ENCODE measurements at regions of chr1 and their contacts with region 1.

Region 1: DNA sequence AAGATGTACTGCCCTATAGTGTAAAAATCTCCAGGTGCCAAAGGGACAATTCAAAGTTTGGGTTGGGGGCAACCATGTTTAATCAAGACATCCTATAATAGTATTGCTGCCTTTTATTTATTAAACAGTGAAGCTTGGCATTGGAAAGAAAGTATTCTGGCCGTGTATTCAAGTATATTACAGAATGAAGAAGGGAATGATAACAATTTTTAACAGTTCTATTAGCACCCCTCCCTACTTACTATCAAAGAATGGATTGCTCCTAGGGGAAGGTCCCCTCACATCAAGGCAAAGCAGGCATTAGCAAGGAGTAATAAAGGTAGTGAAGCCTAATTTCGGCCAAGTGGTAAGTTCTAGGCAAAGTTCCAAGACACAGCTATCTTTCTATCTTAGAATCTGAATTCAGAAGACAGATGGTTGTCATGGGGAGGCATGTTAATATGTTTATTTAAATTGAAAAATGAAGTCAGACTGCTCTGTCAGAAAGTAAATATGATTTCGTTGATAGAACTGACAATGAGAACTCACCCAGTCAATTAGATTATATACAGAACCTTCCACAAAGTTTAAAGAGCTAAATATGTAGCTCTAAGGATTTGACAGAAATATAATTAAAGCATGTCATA is 24.6 kb downstream of the ST7L start:
- DNase-seq: no peak
- H3K4me3 ChIP-seq: no peak overlapping the region
- CTCF ChIP-seq: no peak

Region 2: GRCh38 chr1:112544011-112544688 is 50.2 kb before region 1 on chr1:
- in situ Hi-C with region 1: loop called (anchors 5 kb)
- DNase-seq: peak; percentile 81
- H3K4me3 ChIP-seq: no peak overlapping the region
- CTCF ChIP-seq: no peak

Measured in astrocyte of the cerebellum (primary cell).